Natural killer cell (primary cell): ENCODE measurements at regions of chr5 and their contacts with region 1.

Region 1: GRCh38 chr5:68252673-68253623 is 37.4 kb downstream of the PIK3R1 start:
- DNase-seq: peak in 1 of 2 donors; percentile 74
- ATAC-seq: peak; percentile 53 to 66 (median 65)
- H3K4me3 ChIP-seq: no peak overlapping the region
- H3K4me3 Mint-ChIP-seq: peak overlapping the region; percentile 9
- H3K27ac ChIP-seq: no peak overlapping the region
- H3K27ac Mint-ChIP-seq: peak overlapping the region; percentile 87 to 90
- H3K4me1 ChIP-seq: peaks cover 48% of the 10 kb centered on the region
- H3K4me1 Mint-ChIP-seq: peaks cover 86 to 88% of the 10 kb centered on the region in 2 donors
- H3K27me3 ChIP-seq: no peaks in the 10 kb centered on the region
- H3K27me3 Mint-ChIP-seq: no peaks in the 10 kb centered on the region
- CTCF ChIP-seq: peak; percentile 67

Region 2: DNA sequence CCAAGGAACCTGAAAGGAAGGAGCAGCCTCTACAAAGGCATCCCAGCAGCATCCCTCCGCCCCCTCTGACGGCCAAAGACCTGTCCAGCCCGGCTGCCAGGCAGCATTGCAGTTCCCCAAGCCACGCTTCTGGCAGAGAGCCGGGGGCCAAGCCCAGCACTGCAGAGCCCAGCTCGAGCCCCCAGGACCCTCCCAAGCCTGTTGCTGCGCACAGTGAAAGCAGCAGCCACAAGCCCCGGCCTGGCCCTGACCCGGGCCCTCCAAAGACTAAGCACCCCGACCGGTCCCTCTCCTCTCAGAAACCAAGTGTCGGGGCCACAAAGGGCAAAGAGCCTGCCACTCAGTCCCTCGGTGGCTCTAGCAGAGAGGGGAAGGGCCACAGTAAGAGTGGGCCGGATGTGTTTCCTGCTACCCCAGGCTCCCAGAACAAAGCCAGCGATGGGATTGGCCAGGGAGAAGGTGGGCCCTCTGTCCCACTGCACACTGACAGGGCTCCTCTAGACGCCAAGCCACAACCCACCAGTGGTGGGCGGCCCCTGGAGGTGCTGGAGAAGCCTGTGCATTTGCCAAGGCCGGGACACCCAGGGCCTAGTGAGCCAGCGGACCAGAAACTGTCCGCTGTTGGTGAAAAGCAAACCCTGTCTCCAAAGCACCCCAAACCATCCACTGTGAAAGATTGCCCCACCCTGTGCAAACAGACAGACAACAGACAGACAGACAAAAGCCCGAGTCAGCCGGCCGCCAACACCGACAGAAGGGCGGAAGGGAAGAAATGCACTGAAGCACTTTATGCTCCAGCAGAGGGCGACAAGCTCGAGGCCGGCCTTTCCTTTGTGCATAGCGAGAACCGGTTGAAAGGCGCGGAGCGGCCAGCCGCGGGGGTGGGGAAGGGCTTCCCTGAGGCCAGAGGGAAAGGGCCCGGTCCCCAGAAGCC is 1087.2 kb before region 1 on chr5:
- intact Hi-C with region 1: loop called (anchors 10 kb)
- DNase-seq: peak; percentile 75 to 89
- ATAC-seq: peak; percentile 80 to 91 (median 83)
- H3K4me3 ChIP-seq: peak overlapping the region; percentile 58
- H3K4me3 Mint-ChIP-seq: peak overlapping the region; percentile 90
- H3K27ac ChIP-seq: peak overlapping the region; percentile 97
- H3K27ac Mint-ChIP-seq: peak overlapping the region; percentile 92 to 97
- H3K4me1 ChIP-seq: peaks cover 36% of the 10 kb centered on the region
- H3K4me1 Mint-ChIP-seq: peaks cover 50 to 60% of the 10 kb centered on the region in 2 donors
- H3K27me3 ChIP-seq: no peaks in the 10 kb centered on the region
- H3K27me3 Mint-ChIP-seq: no peaks in the 10 kb centered on the region
- CTCF ChIP-seq: peak; percentile 73

Region 3: DNA sequence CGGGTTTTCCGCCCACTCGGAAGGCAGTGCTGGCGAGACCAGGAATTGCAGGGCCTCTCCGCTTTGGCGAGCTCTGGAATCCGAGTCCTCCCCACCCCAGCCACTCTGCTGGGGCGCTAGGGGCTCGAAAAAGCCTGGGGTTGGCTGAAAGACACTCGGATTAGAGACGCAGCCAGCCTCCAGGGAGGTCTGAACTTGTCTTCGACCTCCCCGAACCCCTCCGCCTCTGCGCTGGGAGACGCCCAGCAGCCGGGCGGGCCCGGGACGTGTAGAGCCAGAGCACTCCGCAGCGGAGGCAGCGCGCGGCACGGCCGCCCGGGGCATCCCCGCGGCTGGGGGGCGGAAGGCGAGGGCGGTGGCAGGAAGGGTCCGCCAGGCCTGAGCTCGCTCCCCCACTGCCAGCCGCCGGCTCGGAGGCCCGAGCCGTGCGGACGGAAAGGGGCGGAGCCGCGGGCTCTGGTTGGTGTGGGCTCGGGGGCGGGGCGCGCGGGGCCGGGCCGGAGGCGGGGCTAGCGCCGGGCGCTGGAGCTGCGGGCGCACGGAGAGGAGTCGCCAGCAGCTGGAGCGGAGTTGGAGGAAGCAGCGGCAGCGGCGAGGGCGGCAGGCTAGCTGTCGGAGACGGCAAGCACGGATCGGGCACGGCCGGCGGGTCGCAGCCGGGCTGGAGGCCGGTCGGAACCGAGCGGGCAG is 37.6 kb before region 1 on chr5 and contains the start of gene PIK3R1:
- intact Hi-C with region 1: loop called (anchors 1 kb)
- DNase-seq: peak; percentile 95
- ATAC-seq: peak; percentile 81 to 95 (median 86)
- H3K4me3 ChIP-seq: peak within 1 kb of the TSS; percentile 94
- H3K4me3 Mint-ChIP-seq: peak within 1 kb of the TSS; percentile 92
- H3K27ac ChIP-seq: peak within 1 kb of the TSS; percentile 98
- H3K27ac Mint-ChIP-seq: peak within 1 kb of the TSS; percentile 86 to 90
- H3K4me1 ChIP-seq: peaks cover 13% of the 10 kb centered on the region
- H3K4me1 Mint-ChIP-seq: peaks cover 38 to 48% of the 10 kb centered on the region in 2 donors
- H3K27me3 ChIP-seq: no peaks in the 10 kb centered on the region
- H3K27me3 Mint-ChIP-seq: no peaks in the 10 kb centered on the region
- CTCF ChIP-seq: peak; percentile 19
- total RNA-seq, gene PIK3R1: 307 to 365 (median 313) TPM

Region 4: GRCh38 chr5:68225911-68226545 is 26.9 kb before region 1 on chr5:
- intact Hi-C with region 1: no loop called
- DNase-seq: no peak
- ATAC-seq: peak; percentile 50 to 57 (median 53)
- H3K4me3 ChIP-seq: no peak overlapping the region
- H3K4me3 Mint-ChIP-seq: peak overlapping the region; percentile 76
- H3K27ac ChIP-seq: peak overlapping the region; percentile 55
- H3K27ac Mint-ChIP-seq: peak overlapping the region; percentile 88 to 91
- H3K4me1 ChIP-seq: peaks cover 40% of the 10 kb centered on the region
- H3K4me1 Mint-ChIP-seq: peaks cover 94% of the 10 kb centered on the region in 2 donors
- H3K27me3 ChIP-seq: no peaks in the 10 kb centered on the region
- H3K27me3 Mint-ChIP-seq: no peaks in the 10 kb centered on the region
- CTCF ChIP-seq: no peak